WTC11 (cell line): ENCODE measurements at regions of chr1 and their contacts with region 1.

Region 1: DNA sequence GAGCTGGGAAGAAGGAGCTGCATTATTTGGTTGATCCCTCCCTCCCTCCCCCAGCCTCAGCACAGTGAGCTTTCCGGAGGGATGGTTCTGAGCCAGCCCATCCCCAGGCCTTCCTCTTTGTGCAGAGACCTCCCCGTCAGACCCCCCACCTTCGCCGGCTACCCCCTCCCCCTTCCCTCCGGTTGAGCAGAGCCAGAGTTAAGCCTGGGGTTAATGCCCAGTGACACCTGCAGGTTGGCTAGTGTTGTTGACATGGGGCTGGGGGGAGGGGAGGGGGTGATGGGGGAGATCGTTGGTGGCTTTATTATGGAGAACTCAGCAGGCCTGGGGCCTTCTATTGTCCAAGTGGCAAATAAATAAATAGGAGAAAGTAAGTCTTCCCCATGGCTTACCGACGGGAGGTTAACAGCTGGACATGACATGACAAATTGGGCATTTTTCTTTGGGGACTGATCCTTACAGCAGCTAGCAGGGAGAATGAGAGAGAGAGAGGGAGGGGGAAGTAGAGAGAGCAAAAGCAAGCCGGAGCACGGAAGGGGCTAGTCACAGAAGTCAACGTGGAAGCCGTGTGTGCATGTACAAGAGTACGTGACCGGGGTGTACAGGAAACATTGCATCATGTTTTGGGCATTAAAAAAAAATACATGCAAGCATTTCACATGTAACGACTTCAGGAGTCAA is 131.1 kb downstream of the TMEM53 start:
- DNase-seq: peak; percentile 94
- ATAC-seq: peak; percentile 93
- H3K4me3 Mint-ChIP-seq: peak overlapping the region; percentile 64
- H3K27ac Mint-ChIP-seq: peak overlapping the region; percentile 99
- H3K4me1 Mint-ChIP-seq: peaks cover 78% of the 10 kb centered on the region
- H3K27me3 Mint-ChIP-seq: peaks cover 28% of the 10 kb centered on the region
- CTCF ChIP-seq: no peak

Region 2: GRCh38 chr1:44405041-44405797 is 138.0 kb before region 1 on chr1 and contains the start of gene RNF220:
- CTCF ChIA-PET with region 1: interaction called, 12 read pairs
- POLR2A ChIA-PET with region 1: interaction called, 3 read pairs
- DNase-seq: peak; percentile 69
- ATAC-seq: peak; percentile 74
- H3K4me3 Mint-ChIP-seq: peak within 1 kb of the TSS; percentile 95
- H3K27ac Mint-ChIP-seq: peak within 1 kb of the TSS; percentile 96
- H3K4me1 Mint-ChIP-seq: 0 out of 2 replicates have a peak, but pooled peaks cover 3% of the 10 kb centered on the region
- H3K27me3 Mint-ChIP-seq: peaks cover 20% of the 10 kb centered on the region
- CTCF ChIP-seq: no peak
- total RNA-seq, gene RNF220: 117 to 128 TPM (median 124 TPM) in 3 replicates

Region 3: DNA sequence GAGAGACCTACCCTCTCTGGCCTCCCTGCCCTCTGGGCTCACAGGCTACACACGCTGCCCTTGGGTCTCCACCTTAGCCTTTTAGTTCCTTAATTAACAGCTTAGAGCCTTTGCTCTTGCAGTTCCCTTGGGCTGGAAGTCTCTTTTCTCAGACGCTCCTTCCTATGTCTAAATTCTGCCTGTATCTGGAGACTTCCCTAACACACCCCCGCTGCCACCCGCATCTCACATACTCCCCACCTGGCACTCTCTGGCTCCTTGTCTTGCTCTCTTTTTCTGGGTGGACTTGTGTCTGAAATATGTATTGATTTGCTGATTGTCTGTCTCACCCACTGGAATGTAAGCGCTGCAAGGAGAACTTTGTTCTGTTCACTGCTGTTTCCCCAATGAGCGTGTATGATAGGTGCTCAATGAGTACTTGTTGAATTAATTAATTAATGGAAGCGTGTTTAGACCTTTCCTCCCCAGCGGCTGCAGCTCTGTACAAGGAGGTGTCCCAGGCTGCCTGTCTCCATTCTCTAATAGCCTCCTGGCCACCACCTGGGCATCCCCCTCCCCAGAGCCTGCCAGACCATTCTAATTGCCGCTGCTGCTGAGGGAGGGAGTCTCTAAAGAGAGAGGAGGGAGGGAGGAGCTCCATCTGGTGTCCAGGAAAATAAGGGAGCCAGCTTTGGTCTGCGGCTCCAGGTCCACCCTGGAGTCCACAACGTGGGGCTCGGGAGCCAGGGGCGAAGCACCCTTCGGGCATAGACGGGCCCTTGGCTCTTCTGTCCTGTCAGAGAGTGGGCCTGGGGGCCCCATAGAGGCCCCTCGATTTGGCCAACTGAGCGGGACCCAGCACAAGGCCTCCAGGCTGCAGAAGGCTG is 42.8 kb before region 1 on chr1:
- CTCF ChIA-PET with region 1: interaction called, 43 read pairs
- POLR2A ChIA-PET with region 1: interaction called, 3 read pairs
- DNase-seq: peak; percentile 62
- ATAC-seq: peak; percentile 72
- H3K4me3 Mint-ChIP-seq: no peak overlapping the region
- H3K27ac Mint-ChIP-seq: no peak overlapping the region
- H3K4me1 Mint-ChIP-seq: peaks cover 40% of the 10 kb centered on the region
- H3K27me3 Mint-ChIP-seq: peaks cover 3% of the 10 kb centered on the region
- CTCF ChIP-seq: 0 out of 2 replicates have a peak, but pooled peaks have one; percentile 12

Region 4: GRCh38 chr1:44523593-44524591 is 19.3 kb before region 1 on chr1:
- CTCF ChIA-PET with region 1: interaction called, 69 read pairs
- POLR2A ChIA-PET with region 1: interaction called, 16 read pairs
- DNase-seq: peak; percentile 76
- ATAC-seq: peak; percentile 95
- H3K4me3 Mint-ChIP-seq: no peak overlapping the region
- H3K27ac Mint-ChIP-seq: peak overlapping the region; percentile 86
- H3K4me1 Mint-ChIP-seq: peaks cover 26% of the 10 kb centered on the region
- H3K27me3 Mint-ChIP-seq: no peaks in the 10 kb centered on the region
- CTCF ChIP-seq: no peak

Region 5: DNA sequence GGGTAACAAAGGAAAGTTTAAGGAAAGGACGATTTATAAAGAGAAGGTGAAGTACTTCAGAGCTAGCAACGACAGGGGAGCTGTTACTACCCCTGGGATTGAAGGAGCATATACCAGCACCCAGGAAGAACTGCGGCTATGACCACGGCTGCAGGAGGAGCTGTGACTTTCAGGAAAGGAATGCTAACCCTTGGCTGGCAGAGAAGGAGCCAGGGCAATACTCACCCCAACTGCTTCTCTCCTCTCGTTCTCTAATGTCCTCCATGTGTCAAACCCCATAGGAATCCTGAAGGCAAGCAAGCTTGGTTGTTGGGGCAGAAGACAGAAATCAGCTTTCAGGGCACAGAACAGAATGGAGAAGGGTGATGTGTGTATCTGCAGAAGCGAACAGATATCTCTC is 10.6 kb after region 1 on chr1:
- CTCF ChIA-PET with region 1: interaction called, 24 read pairs
- POLR2A ChIA-PET with region 1: interaction called, 4 read pairs
- DNase-seq: no peak
- ATAC-seq: no peak
- H3K4me3 Mint-ChIP-seq: no peak overlapping the region
- H3K27ac Mint-ChIP-seq: no peak overlapping the region
- H3K4me1 Mint-ChIP-seq: peaks cover 37% of the 10 kb centered on the region
- H3K27me3 Mint-ChIP-seq: no peaks in the 10 kb centered on the region
- CTCF ChIP-seq: no peak

Region 6: DNA sequence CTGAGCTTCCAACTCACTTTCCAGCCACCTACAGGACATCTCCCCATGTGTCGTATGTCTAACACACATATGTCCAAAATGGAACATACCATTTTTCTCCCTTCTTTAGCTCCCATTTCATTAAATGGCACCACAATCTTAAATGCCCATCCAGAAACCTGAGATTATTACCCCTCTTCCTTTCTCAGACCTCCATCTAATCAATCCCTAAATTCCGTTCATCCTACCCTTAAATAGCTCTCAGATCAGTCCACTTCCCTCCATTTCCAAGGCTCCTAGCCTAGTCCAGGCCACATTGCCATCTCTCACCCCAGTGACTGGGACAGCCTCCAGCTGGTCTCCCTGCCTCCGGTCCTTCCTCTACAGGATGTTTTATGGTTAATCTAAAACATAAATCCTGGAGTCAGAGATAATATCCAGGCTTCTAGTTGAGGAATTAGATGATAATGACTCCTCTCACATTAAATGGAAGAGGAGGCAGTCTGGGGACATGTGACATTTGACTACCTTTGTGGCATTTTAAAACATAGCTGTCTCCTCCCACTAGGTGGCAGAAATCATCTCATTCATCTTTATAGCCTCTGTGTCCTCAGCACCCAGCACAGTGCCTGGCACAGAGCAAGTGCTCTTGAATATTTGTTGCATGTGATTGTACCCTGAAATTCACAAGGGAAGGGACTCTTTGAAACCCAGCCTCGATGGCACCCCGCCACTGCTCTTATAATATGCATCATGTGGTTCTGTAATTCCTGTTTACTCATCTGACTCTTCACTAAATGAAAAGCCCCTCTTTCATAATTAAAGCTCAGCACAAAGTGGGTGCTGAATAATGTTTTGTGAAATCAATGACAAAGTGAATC is 28.7 kb after region 1 on chr1:
- CTCF ChIA-PET with region 1: interaction called, 18 read pairs
- POLR2A ChIA-PET with region 1: no interaction called
- DNase-seq: no peak
- ATAC-seq: peak; percentile 46
- H3K4me3 Mint-ChIP-seq: no peak overlapping the region
- H3K27ac Mint-ChIP-seq: no peak overlapping the region
- H3K4me1 Mint-ChIP-seq: peaks cover 22% of the 10 kb centered on the region
- H3K27me3 Mint-ChIP-seq: peaks cover 3% of the 10 kb centered on the region; the same call in 1 of the 2 replicates
- CTCF ChIP-seq: no peak; the same call in 1 of the 2 replicates

Region 7: GRCh38 chr1:44609412-44609767 is 66.2 kb after region 1 on chr1:
- CTCF ChIA-PET with region 1: interaction called, 21 read pairs
- POLR2A ChIA-PET with region 1: no interaction called
- DNase-seq: peak; percentile 88
- ATAC-seq: peak; percentile 88
- H3K4me3 Mint-ChIP-seq: no peak overlapping the region
- H3K27ac Mint-ChIP-seq: no peak overlapping the region
- H3K4me1 Mint-ChIP-seq: peaks cover 11% of the 10 kb centered on the region
- H3K27me3 Mint-ChIP-seq: no peaks in the 10 kb centered on the region
- CTCF ChIP-seq: peak; percentile 29; the same call in 1 of the 2 replicates